ENCODE measurements at regions of chr2 and their contacts with region 1.

Region 1: DNA sequence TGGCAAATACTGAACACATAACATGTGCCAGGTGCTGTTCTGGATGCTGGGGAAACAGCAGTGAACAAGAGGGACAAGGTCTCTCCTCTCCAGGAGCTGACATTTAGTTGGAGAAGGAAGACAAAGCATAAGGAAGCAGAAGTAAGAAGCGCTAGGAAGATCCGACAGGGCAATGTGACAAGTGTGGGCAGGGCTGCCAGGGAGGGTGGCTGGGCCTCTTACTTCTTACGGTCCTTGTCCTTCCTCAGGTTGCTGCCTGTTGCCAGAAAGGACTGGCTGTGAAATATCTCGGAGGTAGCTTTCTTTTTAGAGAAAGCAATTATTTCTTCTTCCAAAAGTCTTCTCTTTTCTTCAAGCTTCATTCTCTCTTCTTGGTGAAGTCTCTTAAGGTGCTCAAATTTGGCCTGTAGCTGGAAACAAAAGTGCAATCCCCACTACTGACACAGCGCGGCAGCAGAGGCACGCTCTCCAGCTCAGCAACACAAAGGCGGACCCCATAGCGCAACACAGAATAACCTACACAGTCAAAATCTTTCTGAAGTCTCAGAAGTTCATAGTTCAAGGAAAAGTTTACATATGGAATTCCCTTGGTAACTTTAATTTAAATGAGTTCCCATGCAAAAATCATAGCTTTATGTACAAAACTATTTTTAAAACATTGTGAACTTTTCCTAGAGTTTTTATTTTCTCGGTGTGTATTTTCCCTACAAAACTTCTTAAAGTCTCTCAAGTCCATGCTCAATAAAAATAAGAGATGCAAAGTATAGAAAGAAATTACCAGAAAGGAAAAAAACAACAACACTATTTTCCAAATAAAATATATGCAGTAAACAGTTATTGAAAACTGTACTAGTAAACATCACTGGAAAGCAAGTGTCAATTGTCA is 67.7 kb downstream of the SEPTIN10 start:
- DNase-seq: peak; percentile 29 to 81
- H3K4me3 ChIP-seq: no peak overlapping the region
- H3K27ac ChIP-seq: no peak overlapping the region
- H3K4me1 ChIP-seq: no peaks in the 10 kb centered on the region
- H3K27me3 ChIP-seq: no peaks in the 10 kb centered on the region
- CTCF ChIP-seq: peak; percentile 82 to 90 (median 87)
- EP300 ChIP-seq: no peak
- POLR2A ChIP-seq: no peak
- RAD21 ChIP-seq: peak; percentile 92

Region 2: GRCh38 chr2:109447251-109447661 is 98.8 kb before region 1 on chr2:
- CTCF ChIA-PET with region 1: no interaction called
- POLR2A ChIA-PET with region 1: no interaction called
- DNase-seq: no peak
- H3K4me3 ChIP-seq: no peak overlapping the region
- H3K27ac ChIP-seq: no peak overlapping the region
- H3K4me1 ChIP-seq: no peaks in the 10 kb centered on the region
- H3K27me3 ChIP-seq: no peaks in the 10 kb centered on the region
- CTCF ChIP-seq: no peak
- EP300 ChIP-seq: no peak
- POLR2A ChIP-seq: no peak
- RAD21 ChIP-seq: no peak

Region 3: GRCh38 chr2:109486711-109487535 is 59.1 kb before region 1 on chr2:
- CTCF ChIA-PET with region 1: no interaction called
- POLR2A ChIA-PET with region 1: no interaction called
- DNase-seq: no peak
- H3K4me3 ChIP-seq: no peak overlapping the region
- H3K27ac ChIP-seq: no peak overlapping the region
- H3K4me1 ChIP-seq: no peaks in the 10 kb centered on the region
- H3K27me3 ChIP-seq: no peaks in the 10 kb centered on the region
- CTCF ChIP-seq: no peak
- EP300 ChIP-seq: no peak
- POLR2A ChIP-seq: no peak
- RAD21 ChIP-seq: no peak

Region 4: DNA sequence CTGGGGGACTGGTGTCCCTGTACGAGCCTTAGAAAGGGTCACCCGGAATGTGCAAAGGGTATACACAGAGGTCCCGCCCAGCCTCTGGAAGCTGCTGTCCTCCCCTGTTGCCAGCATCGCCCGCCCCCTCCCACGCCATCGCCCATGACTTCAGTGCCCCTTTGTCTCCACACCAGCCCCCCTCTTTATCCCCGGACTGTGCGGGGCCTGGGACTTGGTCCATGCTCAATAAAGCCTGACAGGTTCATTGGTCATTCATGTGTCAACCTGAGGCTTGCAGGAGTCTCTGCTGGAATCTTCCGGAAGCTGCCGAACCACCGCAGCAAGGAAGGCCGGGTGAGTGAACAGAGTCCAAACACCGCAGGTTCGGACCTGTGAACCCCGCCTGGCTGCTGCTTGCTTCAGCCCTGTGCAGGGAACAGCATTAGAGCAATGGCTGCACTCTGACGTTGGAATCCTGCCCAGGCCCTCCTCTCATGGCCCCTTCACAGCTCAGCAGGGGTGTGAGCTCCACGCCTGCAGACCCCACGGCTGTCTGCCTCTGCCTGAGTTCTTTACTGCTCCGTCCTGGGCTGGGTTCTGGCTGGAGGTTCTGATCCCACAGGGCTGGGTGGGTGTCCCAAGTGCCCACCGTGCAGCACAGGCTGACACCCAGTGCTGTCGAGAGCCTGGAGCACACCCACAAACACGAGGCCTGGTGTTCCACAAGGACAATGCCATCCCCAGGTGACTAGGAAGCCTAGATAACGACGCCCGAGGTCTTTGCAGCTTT is 28.8 kb before region 1 on chr2:
- CTCF ChIA-PET with region 1: interaction called, 10 read pairs
- POLR2A ChIA-PET with region 1: no interaction called
- DNase-seq: no peak
- H3K4me3 ChIP-seq: no peak overlapping the region
- H3K27ac ChIP-seq: no peak overlapping the region
- H3K4me1 ChIP-seq: no peaks in the 10 kb centered on the region
- H3K27me3 ChIP-seq: no peaks in the 10 kb centered on the region
- CTCF ChIP-seq: no peak
- EP300 ChIP-seq: no peak
- POLR2A ChIP-seq: no peak
- RAD21 ChIP-seq: no peak

Region 5: GRCh38 chr2:109558076-109558882 is 12.2 kb after region 1 on chr2:
- CTCF ChIA-PET with region 1: interaction called, 50 read pairs
- POLR2A ChIA-PET with region 1: no interaction called
- DNase-seq: no peak
- H3K4me3 ChIP-seq: no peak overlapping the region
- H3K27ac ChIP-seq: no peak overlapping the region
- H3K4me1 ChIP-seq: no peaks in the 10 kb centered on the region
- H3K27me3 ChIP-seq: peaks cover 0 to 1% (median 0%) of the 10 kb centered on the region in 4 experiments; a peak in 1 of 7 replicates
- CTCF ChIP-seq: no peak
- EP300 ChIP-seq: no peak
- POLR2A ChIP-seq: no peak
- RAD21 ChIP-seq: no peak

Region 6: DNA sequence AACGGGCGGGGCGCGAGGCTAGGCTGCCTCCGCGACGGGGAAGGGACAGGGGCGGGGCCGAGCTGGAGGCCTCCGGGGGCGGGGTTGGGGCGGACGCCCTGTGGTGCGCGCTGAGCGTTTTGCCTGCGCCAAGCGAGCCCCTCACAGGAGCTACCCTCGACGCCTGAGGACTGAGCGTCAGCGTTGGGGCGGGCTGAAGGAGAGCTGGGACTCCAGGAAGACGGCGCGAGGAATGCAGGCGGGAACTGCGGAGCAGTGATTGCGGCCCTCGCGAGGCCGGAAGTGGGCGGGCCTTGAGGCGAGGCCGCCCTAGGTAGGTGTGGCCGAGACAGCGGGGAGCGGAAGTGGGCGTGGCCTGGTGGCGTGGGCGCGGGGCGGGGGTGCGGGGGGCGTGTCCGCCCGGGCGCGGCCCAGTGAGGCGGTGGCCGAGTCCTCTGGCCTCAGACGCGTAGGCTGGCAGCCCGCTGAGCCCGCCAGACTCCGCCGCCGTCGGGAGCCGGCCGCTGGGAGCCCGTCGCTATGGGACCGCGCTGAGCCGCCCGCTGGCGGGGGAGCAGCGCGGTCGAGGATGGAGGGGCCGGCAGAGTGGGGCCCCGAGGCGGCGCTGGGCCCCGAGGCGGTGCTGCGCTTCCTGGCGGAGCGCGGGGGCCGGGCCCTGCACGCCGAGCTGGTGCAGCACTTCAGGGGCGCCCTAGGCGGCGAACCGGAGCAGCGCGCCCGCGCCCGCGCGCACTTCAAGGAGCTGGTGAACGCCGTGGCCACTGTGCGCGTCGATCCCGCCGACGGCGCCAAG is 68.0 kb after region 1 on chr2 and contains the starts of genes SEPTIN10 and SOWAHC:
- CTCF ChIA-PET with region 1: interaction called, 17 read pairs
- POLR2A ChIA-PET with region 1: interaction called, 4 read pairs
- DNase-seq: peak; percentile 96
- H3K4me3 ChIP-seq: peak within 1 kb of the TSS; percentile 82 to 97 (median 88)
- H3K27ac ChIP-seq: peak within 1 kb of the TSS; percentile 72
- H3K4me1 ChIP-seq: peaks cover 0 to 17% (median 9%) of the 10 kb centered on the region in 4 experiments; a peak in 5 of 7 replicates
- H3K27me3 ChIP-seq: peaks cover 0 to 17% (median 11%) of the 10 kb centered on the region in 4 experiments; a peak in 5 of 7 replicates
- CTCF ChIP-seq: no peak
- EP300 ChIP-seq: 0 out of 3 replicates have a peak, but pooled peaks of 1 of the 2 experiments have one; percentile 18
- POLR2A ChIP-seq: peak; percentile 78 to 89
- RAD21 ChIP-seq: no peak
- total RNA-seq, gene SEPTIN10: 93.6 and 101 TPM in 2 replicates
- total RNA-seq, gene SOWAHC: 16.8 and 17.8 TPM in 2 replicates

Region 7: DNA sequence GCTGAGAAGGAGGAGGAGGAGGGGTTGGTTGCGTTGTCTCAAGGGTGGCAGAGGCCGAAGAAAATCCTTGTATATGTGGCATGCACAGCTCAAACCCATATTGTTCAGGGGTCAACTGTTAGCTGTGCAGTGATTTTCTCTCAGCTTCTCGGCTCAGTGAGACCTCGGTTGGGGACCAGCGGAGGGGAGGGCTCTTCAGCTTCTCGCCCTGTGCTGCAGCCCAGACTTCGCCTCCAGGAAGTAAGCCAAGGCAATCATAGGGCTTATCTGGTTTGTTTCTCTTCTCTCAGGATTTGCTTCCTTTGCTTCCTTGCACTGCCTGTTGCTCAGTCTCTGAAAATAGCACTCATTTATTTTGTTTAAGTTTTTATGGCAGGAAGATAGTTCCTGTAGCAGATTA is 153.6 kb after region 1 on chr2:
- CTCF ChIA-PET with region 1: interaction called, 14 read pairs
- POLR2A ChIA-PET with region 1: no interaction called
- DNase-seq: no peak
- H3K4me3 ChIP-seq: no peak overlapping the region
- H3K27ac ChIP-seq: no peak overlapping the region
- H3K4me1 ChIP-seq: peaks cover 2 to 11% (median 5%) of the 10 kb centered on the region in 4 experiments; a peak in 6 of 7 replicates
- H3K27me3 ChIP-seq: no peaks in the 10 kb centered on the region
- CTCF ChIP-seq: no peak
- EP300 ChIP-seq: no peak
- POLR2A ChIP-seq: no peak
- RAD21 ChIP-seq: no peak

Region 8: DNA sequence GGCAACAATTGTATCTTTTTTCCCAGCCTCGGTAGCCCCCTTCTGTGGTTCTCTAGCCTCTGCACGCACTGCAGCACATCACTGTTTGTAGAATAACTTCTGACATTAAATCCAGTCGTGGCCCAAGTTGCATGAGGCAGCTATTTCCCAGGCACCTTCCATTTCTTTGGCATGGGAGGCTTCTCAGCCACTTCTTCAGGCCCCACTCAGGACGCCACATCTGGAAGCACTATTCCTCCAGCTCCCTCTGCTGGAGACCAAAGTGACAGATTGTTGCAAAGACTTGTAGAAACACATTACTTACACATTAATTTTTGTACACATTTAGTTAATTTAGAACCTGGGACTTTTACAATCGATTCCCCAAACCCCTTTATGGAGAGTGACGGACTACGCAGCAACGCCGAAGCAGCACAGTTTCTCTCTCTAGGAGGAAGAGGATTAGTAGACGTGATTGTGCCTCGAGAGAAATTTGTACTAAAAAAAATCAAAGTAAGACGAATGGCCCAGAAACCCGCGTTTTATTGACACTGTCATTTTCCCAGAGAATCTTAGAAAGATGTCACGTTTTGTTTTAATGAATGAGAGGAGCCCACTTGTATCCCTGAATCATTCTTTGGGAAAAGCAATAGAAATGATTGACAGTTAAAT is 190.2 kb after region 1 on chr2:
- CTCF ChIA-PET with region 1: interaction called, 38 read pairs
- POLR2A ChIA-PET with region 1: no interaction called
- DNase-seq: no peak
- H3K4me3 ChIP-seq: no peak overlapping the region
- H3K27ac ChIP-seq: no peak overlapping the region
- H3K4me1 ChIP-seq: no peaks in the 10 kb centered on the region
- H3K27me3 ChIP-seq: no peaks in the 10 kb centered on the region
- CTCF ChIP-seq: peak; percentile 25 to 57 (median 52)
- EP300 ChIP-seq: no peak
- POLR2A ChIP-seq: no peak
- RAD21 ChIP-seq: peak; percentile 67 to 76